Posterior cingulate gyrus (tissue), 11 donors: ENCODE measurements at regions of chr11 and their contacts with region 1.

Region 1: DNA sequence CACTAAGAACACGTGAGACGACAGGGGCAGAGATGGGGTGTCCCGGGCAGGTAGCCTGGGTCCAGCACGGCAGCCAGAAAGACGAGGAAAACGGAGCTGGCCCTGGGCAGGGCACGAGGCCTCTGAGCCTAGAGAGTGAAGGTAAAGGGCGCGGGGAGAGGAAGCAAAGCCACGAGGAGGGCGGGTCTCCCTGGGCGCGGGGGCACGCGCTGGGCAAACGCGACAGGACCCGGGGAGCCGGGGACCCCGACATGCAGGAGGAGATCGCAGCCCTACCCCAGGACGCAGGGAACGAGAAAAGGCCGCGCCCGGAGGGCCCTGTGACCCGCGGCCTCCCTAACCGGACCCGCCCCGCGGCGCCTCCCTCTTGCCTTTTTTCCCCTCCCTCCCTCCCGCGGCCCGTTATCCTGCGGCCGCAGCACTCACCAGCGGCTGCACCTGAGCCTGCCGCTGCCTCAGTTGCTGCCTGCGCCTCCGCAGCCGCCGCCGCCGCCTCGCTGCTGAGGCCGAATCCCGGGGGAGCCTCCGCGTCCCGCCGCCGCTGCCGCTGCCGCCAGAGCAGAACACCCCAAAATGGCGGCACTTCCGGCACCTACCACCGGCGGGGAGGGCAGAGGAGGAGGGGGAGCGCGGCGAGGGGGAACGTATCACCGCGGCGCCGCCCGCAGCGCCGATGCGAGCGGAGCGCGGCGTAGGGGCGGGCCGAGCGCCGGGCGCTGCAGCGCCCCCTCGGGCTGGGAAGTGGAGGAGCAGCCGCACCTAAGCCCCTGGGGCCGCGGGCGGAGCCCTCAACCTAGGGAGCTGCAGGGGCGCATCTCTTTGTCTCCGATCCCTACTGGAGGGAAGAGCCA is at the start of gene CELF1:
- DNase-seq: peak; percentile 83 to 98 (median 90)

Region 2: DNA sequence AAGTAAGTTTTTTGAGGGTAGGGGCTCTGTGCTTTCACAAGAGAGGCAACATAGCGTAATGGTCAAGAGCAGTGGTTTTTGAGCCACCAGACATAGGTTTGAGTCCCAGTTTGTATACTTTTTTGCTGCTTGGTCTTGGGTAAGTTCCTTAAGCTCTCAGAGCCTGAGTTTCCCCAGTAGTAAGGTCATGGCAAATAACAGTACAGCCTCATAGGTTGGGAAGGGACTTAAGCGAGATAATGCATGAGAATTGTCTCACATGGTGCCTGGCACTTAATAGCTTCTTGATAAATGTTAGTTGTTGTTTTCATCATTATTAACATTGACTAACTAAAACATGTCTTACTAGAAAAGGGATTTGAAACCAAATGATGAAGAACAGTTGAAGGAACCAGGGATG is 459.2 kb before region 1 on chr11:
- intact Hi-C with region 1: no loop called
- DNase-seq: no peak

Region 3: GRCh38 chr11:47407746-47408590 is 144.8 kb before region 1 on chr11 and contains the start of gene SLC39A13:
- intact Hi-C with region 1: loop called (anchors 5 kb)
- DNase-seq: peak; percentile 86 to 99 (median 92)

Region 4: GRCh38 chr11:47469361-47470179 is 83.2 kb before region 1 on chr11:
- intact Hi-C with region 1: loop called (anchors 2 kb)
- DNase-seq: peak in 1 of 10 donors; percentile 20

Region 5: GRCh38 chr11:47578524-47579460 is 26.0 kb after region 1 on chr11 and contains the starts of genes KBTBD4 and NDUFS3:
- intact Hi-C with region 1: loop called (anchors 1 kb)
- DNase-seq: peak; percentile 86 to 98 (median 90)

Region 6: DNA sequence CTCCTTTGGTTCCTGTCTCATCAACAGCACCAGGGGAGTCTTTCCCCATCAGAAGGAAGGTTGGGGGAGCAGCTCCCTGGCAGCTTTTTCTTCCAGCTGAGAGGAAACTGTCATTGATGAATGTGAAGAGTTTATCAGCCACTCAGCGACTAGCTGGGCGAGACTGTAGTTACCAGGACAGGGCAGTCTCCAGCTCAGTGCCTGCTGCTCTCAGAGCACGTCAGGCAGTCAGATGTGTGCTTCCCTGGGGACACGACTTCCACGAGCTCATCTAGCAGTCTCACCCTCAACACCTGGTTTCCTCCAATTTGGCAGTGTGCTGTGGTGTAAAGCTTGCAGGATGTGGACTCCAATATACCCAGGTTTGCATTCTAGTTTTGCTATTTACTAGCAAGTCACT is 53.9 kb after region 1 on chr11:
- intact Hi-C with region 1: no loop called
- DNase-seq: no peak

Region 7: DNA sequence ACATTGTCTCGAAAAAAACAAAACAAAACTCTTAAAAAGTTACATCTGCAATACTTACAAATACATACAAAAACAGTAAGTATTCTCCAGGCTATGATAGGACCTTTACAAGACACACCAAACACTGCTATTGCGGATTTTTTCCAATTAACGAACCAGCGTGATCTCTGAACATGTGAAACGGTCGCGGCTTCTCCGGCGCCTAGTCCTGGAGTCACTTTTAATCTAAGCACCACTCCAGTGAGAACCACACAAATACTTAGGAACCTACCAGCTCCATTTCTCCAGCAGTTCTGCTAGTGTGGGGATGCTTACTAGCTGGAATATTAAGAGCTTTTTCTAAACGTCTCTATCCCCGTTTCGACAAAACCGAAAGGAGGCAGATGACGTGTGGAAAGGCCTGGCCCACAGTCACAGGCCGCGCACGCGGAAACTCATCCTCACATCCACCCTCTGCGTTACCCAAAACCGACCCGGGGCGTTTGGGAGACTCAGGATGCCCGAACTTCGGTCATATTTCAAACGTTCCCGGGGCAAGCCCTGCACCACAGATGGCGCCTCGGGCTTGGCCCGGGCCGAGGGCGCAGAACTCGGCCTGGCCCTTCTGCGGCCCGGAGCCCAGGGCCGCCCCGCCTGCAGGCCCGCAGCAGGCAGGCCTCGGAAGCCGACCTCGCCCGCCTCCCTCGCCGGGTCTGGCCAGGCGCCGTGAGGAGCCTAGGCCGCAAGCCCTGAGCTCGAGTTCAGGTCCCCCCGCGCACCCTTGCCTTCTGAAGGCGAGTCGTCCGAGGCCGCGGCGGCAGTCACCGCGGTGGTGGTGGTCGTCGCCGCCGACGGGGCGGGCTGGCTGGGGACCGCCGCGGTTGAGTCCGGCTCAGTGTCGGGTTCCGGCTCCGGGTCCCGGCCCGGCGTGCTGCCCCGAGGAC is 213.8 kb after region 1 on chr11:
- intact Hi-C with region 1: loop called (anchors 10 kb)
- DNase-seq: peak; percentile 41 to 89 (median 54)

Region 8: DNA sequence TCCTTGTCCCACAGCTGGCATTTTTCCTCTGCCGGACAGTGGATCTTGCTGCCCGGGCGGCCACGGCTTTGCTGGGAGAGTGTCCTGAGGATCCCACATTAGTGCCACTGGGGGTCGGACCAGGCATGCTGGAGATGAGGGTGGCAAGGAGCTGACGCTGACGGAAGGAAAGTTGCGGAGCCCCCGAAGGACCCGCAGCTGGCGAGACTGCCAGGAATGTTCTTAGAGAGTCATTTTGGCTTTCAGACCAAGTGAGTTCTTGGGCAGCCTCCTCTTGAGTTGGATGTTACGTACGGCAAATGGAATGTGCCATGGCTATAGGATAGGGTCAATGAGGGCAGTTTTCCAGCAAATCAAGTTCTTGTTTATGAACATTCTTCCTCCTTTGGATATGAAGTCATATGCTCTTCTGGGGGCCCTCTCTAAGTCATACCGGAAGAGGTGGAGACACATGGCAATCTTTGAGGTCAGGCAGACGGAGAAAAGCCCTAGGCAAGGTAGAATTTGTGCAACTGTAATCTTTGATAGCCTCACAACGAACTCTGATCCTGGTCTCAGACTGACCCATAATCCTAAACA is 352.8 kb after region 1 on chr11:
- intact Hi-C with region 1: no loop called
- DNase-seq: no peak